ENCODE measurements at regions of chr2 and their contacts with region 1.

Region 1: DNA sequence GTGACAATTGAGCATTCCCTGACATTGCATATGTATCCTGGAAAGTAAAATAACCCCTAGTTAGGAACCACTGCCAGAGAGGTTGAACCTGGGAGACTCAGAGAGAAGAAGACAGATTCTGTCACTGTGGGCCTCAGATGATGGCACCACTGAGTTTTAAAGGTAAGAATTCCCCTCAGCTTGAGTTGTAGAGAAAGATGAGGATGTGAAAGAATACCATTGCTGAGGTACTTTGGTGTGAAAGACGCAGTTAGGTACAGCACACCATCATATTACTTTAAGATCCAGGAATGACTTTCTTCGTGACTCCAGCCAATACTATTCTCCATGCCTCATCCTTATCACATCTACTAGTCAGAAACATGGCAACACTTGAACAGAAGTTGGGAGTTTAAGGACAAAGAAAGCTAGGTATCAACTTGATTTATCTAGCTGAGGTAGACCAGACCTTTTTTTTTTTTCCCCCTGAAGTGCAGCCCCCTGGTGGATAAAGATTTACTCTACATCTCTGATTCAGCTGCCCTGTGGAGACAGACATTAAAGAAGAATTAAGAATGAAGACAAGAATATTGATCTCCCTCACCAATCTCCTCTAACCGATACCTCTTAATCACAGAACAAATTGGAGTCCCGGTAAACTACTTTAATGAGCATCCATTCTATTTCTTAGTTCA is 630.5 kb upstream of the FANCL start:
- DNase-seq: peak in 1 of 2 experiments; percentile 28
- H3K4me3 ChIP-seq: no peak overlapping the region
- H3K4me3 Mint-ChIP-seq: no peak overlapping the region
- H3K27ac Mint-ChIP-seq: no peak overlapping the region
- H3K4me1 ChIP-seq: no peaks in the 10 kb centered on the region; the same call in 1 of the 2 replicates
- H3K4me1 Mint-ChIP-seq: no peaks in the 10 kb centered on the region
- H3K27me3 ChIP-seq: no peaks in the 10 kb centered on the region
- H3K27me3 Mint-ChIP-seq: no peaks in the 10 kb centered on the region
- CTCF ChIP-seq: peak; percentile 22 to 28

Region 2: GRCh38 chr2:58571181-58571852 is 300.3 kb before region 1 on chr2:
- CTCF ChIA-PET with region 1: interaction called, 3 read pairs
- POLR2A ChIA-PET with region 1: no interaction called
- intact Hi-C with region 1: loop called (anchors 10 kb)
- DNase-seq: peak; percentile 63 to 70
- H3K4me3 ChIP-seq: no peak overlapping the region
- H3K4me3 Mint-ChIP-seq: no peak overlapping the region
- H3K27ac Mint-ChIP-seq: no peak overlapping the region
- H3K4me1 ChIP-seq: peaks cover 9% of the 10 kb centered on the region; the same call in 1 of the 2 replicates
- H3K4me1 Mint-ChIP-seq: no peaks in the 10 kb centered on the region
- H3K27me3 ChIP-seq: no peaks in the 10 kb centered on the region
- H3K27me3 Mint-ChIP-seq: peaks cover 6% of the 10 kb centered on the region
- CTCF ChIP-seq: peak; percentile 56 to 76

Region 3: DNA sequence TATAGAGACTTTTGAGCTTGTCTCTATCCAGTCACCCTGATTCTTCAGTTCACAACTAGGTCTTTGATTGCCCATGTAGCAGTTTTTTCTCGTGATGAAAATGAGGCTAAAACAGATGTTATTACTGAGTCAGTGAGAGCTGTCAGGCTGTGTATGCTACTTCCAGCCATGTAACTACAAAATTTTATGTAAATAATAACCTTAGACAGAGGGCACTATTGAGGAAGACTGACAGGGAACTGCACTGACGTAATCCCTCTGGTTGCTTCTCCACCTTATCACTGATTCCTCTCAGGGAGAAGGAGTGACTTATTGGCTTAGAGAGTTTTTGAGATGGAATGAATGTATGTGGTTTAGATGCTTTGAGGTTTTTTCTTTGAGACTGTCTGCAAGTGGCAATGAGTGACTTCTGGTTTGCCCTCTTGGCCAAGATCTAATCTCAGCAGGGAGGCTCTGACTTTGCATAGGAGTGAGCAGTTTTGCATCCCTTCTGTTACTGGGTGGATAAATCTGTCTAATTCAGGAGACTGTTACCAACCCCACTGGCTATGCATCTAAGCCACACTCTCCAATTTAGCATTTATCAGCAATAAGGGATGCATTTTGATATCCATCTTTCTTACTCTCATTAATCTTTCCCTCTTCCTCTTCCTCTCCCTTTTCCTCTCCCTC is 75.2 kb before region 1 on chr2:
- CTCF ChIA-PET with region 1: no interaction called
- POLR2A ChIA-PET with region 1: no interaction called
- intact Hi-C with region 1: loop called (anchors 1 kb)
- DNase-seq: no peak
- H3K4me3 ChIP-seq: no peak overlapping the region
- H3K4me3 Mint-ChIP-seq: no peak overlapping the region
- H3K27ac Mint-ChIP-seq: no peak overlapping the region
- H3K4me1 ChIP-seq: no peaks in the 10 kb centered on the region
- H3K4me1 Mint-ChIP-seq: no peaks in the 10 kb centered on the region
- H3K27me3 ChIP-seq: no peaks in the 10 kb centered on the region
- H3K27me3 Mint-ChIP-seq: peaks cover 9% of the 10 kb centered on the region
- CTCF ChIP-seq: no peak

Region 4: GRCh38 chr2:58834404-58834803 is 37.2 kb before region 1 on chr2:
- CTCF ChIA-PET with region 1: interaction called, 7 read pairs
- POLR2A ChIA-PET with region 1: no interaction called
- intact Hi-C with region 1: loop called (anchors 5 kb)
- DNase-seq: peak; percentile 54 to 67
- H3K4me3 ChIP-seq: no peak overlapping the region
- H3K4me3 Mint-ChIP-seq: no peak overlapping the region
- H3K27ac Mint-ChIP-seq: no peak overlapping the region
- H3K4me1 ChIP-seq: no peaks in the 10 kb centered on the region
- H3K4me1 Mint-ChIP-seq: no peaks in the 10 kb centered on the region
- H3K27me3 ChIP-seq: no peaks in the 10 kb centered on the region
- H3K27me3 Mint-ChIP-seq: no peaks in the 10 kb centered on the region
- CTCF ChIP-seq: no peak

Region 5: GRCh38 chr2:58842501-58843155 is 29.0 kb before region 1 on chr2:
- CTCF ChIA-PET with region 1: no interaction called
- POLR2A ChIA-PET with region 1: no interaction called
- intact Hi-C with region 1: loop called (anchors 1 kb)
- DNase-seq: peak in 1 of 2 experiments; percentile 52
- H3K4me3 ChIP-seq: no peak overlapping the region
- H3K4me3 Mint-ChIP-seq: peak overlapping the region; percentile 47
- H3K27ac Mint-ChIP-seq: peak overlapping the region; percentile 37
- H3K4me1 ChIP-seq: peaks cover 22% of the 10 kb centered on the region
- H3K4me1 Mint-ChIP-seq: peaks cover 31% of the 10 kb centered on the region
- H3K27me3 ChIP-seq: no peaks in the 10 kb centered on the region
- H3K27me3 Mint-ChIP-seq: no peaks in the 10 kb centered on the region
- CTCF ChIP-seq: no peak

Region 6: GRCh38 chr2:58856100-58856499 is 15.5 kb before region 1 on chr2:
- CTCF ChIA-PET with region 1: interaction called, 3 read pairs
- POLR2A ChIA-PET with region 1: no interaction called
- intact Hi-C with region 1: loop called (anchors 1 kb)
- DNase-seq: peak; percentile 39 to 42
- H3K4me3 ChIP-seq: no peak overlapping the region
- H3K4me3 Mint-ChIP-seq: peak overlapping the region; percentile 68
- H3K27ac Mint-ChIP-seq: peak overlapping the region; percentile 59
- H3K4me1 ChIP-seq: peaks cover 11% of the 10 kb centered on the region
- H3K4me1 Mint-ChIP-seq: peaks cover 14% of the 10 kb centered on the region
- H3K27me3 ChIP-seq: no peaks in the 10 kb centered on the region
- H3K27me3 Mint-ChIP-seq: no peaks in the 10 kb centered on the region
- CTCF ChIP-seq: no peak

Measured in Caco-2 (cell line).